ENCODE measurements at regions of chr3 and their contacts with region 1.

Region 1: GRCh38 chr3:45123030-45123429 is 23.1 kb downstream of the CDCP1 start:
- DNase-seq: peak; percentile 80 to 81
- ATAC-seq: peak; percentile 57 to 67
- H3K4me3 ChIP-seq: no peak overlapping the region
- H3K27ac ChIP-seq: peak overlapping the region; percentile 84 to 98 (median 88)
- H3K4me1 ChIP-seq: peaks cover 52 to 79% of the 10 kb centered on the region in 2 donors
- H3K27me3 ChIP-seq: no peaks in the 10 kb centered on the region
- CTCF ChIP-seq: no peak
- POLR2A ChIP-seq: peak in 1 of 2 donors; percentile 53

Region 2: GRCh38 chr3:45167011-45167911 is 44.2 kb after region 1 on chr3:
- in situ Hi-C with region 1: no loop called
- intact Hi-C with region 1: loop called (anchors 5 kb)
- DNase-seq: peak; percentile 91 to 92
- ATAC-seq: peak; percentile 82 to 95
- H3K4me3 ChIP-seq: no peak overlapping the region
- H3K27ac ChIP-seq: peak overlapping the region in 3 of 4 donors; percentile 60 to 76 (median 66)
- H3K4me1 ChIP-seq: peaks cover 8 to 30% of the 10 kb centered on the region in 2 donors
- H3K27me3 ChIP-seq: no peaks in the 10 kb centered on the region
- CTCF ChIP-seq: no peak
- POLR2A ChIP-seq: peak in 1 of 2 donors; percentile 10

Region 3: DNA sequence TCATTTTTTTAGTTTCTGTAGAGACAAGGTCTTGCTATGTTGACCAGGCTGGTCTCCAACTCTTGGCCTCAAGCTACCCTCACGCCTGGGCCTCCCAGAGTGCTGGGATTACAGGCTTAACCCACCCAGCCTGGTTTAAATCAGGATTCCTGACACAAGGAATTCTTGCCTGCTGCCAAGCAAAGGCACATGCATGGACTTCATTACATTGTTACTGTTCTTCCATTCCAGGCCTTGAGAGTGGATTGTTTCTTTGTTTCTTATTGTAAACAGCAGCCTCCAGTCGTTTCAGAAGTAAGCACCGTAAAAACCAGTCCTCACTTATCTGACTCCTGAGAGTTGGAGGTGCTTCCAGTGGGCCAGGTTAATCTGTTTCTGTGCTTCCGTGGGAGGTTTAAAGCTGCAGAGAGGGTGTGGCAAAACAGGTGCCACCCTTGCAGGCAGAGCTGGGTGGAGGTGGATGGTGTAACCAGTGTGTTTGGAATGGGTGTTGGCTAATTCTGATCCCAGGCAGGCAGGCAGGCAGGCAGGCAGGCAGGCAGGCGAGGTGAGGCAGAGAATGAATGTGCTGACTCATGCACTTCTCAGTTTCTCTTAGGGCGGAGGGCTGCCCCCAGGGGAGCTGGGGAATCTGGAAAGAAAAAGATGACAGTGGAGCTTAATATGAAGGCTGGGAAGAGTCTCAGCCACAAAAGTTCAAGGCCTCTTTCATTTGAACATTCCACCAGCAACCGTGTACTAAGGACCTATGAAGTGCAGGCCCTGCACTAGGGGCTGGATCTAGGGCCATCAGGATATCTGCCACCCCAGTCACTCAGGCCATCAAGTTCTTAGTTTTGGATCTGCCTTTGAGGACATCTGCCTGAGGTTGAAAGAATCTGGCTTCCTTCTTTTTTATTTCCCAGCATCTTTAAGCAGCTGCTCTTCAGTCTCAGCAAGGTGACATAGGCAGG is 60.2 kb after region 1 on chr3:
- in situ Hi-C with region 1: loop called in 1 of 4 experiments (anchors 5 kb)
- intact Hi-C with region 1: loop called (anchors 2 kb)
- DNase-seq: peak; percentile 57 to 84
- ATAC-seq: peak; percentile 55 to 74
- H3K4me3 ChIP-seq: no peak overlapping the region
- H3K27ac ChIP-seq: peak overlapping the region; percentile 67 to 81 (median 72)
- H3K4me1 ChIP-seq: peaks cover 32 to 33% of the 10 kb centered on the region in 2 donors
- H3K27me3 ChIP-seq: no peaks in the 10 kb centered on the region
- CTCF ChIP-seq: no peak
- POLR2A ChIP-seq: no peak